ENCODE measurements at regions of chr6 and their contacts with region 1.

Region 1: DNA sequence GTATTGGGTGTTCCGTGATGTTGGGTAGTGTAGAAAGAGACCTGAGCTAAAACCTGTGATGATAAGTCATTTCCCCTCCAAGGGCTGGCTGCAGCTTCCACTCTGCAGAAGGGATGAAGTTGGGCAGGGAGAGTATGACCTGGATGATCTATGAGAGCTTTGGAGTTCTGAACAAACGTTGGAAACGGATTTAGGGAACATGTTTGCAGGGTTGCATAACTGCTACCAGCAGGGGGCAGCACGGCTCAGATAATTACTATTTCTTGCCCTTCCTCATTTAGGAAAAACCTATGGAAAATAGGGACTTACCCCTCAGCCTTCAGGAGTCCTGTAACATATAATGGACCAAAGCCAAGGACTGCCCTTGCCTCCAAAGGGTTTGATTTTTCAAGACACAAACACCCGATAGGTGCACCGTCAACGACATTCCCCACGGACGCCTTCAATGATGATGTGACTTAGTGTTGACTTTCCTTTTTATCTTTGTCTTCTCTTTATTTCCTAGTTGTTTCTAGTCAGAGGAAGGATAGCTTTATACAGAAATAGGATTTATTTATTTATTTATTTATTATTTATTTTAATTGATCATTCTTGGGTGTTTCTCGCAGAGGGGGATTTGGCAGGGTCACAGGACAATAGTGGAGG is 164.9 kb upstream of the SASH1 start:
- DNase-seq: no peak

Region 2: DNA sequence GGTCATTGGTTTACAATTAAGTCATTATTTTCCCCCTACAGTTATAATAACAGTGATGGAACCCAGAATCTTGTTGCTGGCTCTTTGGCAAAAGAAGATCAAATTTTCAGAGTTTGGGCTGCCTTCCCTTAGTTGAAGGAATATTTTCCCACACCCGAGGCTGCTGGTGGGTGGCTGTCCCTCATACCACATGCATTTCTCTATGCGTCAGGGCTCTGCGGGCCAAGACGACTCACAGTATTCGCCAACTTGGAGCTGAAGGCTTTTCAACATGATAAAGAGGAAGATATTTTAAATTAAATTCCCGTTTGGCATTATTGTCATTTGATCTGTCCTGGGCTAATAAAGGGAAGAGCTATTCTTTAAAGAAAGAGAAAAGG is 62.7 kb after region 1 on chr6:
- intact Hi-C with region 1: loop called in 1 of 2 experiments (anchors 10 kb)
- DNase-seq: no peak

Region 3: DNA sequence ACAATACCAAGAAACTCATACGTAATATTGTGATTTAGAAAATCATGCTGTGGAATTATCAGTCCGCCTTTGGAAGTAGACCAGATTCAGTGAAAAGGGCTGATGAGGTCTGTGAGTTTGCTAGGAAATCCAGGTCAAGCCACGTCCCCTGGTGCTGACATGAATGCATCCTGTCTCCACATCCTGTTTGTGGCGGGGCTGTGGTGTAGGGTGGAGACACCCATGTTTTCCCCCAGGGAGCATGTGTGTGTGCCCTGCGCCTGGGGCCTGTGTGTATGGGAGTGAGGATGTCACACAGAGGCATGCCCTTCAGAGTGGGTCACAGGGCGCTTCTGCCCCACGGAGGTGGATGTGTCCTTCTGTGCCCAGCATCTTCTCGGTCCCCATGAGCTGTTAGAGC is 274.0 kb after region 1 on chr6:
- intact Hi-C with region 1: loop called in 1 of 2 experiments (anchors 10 kb)
- DNase-seq: no peak

Region 4: GRCh38 chr6:148464319-148465010 is 286.8 kb after region 1 on chr6:
- intact Hi-C with region 1: loop called (anchors 10 kb)
- DNase-seq: no peak